ENCODE measurements at regions of chr9 and their contacts with region 1.

Region 1: GRCh38 chr9:131046581-131047202 is 37.7 kb downstream of the LAMC3 start:
- DNase-seq: peak; percentile 74
- ATAC-seq: peak; percentile 84 to 91

Region 2: DNA sequence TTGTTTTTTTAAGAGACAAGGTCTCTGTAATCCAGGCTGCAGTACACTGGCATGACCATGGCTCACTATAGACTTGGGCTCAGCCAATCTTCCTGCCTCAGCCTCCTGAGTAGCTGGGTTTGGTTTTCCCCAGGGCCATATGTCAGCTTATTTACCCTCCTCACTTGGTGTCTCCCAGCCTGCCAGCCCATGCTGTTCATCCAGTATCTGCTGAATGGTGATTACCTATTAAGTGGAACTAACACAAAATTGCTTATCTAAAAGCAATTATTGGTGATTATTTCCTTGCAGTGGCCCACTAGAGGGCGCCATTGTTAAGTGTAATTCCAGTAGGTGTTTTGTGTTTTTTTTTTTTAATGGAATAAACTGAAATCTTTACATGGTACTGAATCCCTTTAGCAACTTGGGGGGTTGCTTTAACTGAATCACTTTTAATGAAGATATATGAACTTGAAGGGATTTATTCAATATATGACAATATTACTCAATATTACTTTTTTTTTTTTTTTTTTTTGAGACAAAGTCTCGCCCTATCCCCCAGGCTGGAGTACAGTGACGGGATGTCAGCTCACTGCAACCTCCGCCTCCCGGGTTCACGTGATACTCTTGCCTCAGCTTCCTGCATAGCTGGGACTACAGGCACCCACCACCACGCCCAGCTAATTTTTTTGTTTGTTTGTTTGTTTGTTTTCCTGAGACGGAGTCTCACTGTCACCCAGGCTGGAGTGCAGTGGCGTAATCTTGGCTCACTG is 339.3 kb before region 1 on chr9:
- intact Hi-C with region 1: loop called in 1 of 2 experiments (anchors 5 kb)
- DNase-seq: peak; percentile 78
- ATAC-seq: peak; percentile 29 to 30

Region 3: DNA sequence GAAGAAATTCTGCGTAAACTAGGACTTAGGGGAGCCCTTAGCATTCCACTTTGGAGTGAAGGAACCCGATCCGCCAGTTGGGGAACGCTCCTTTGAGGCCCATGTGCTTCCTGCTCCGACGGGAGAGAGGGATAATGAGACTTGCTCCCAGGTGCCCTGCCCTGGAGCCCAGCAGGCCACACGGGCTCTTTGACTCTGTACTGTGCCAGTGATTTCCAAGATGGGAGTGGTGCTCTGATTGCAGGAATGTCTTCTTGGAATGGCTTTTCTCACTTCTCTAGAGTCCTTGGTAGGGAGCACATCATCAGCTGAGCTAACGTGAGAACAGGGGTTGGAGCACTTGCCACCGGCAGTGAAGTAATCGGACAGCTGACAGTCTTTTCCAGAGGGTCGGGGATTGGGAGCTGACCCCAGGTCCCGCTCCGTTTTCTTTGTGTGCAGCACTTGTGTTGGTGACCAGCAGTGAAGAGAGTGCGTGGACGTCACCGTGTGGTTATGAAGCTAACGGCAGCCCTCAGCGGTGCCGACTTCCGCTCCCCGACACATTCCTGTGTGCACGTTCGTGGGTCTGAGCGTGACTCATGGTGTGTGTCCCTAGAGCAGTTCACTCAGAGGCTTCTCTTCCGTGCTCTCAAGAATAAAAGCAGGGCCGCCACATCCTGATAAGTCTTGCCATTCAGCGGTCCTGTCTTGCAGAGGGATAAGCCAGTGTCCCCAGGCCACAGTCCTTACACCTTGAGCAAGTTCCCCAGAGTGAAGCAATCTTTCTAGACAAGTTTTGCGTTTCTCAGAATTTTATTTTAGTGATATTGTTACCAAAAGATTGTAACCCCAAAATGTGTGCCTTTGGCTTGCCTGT is 186.0 kb before region 1 on chr9:
- intact Hi-C with region 1: loop called in 1 of 2 experiments (anchors 5 kb)
- DNase-seq: peak; percentile 92
- ATAC-seq: peak; percentile 90 to 95

Region 4: DNA sequence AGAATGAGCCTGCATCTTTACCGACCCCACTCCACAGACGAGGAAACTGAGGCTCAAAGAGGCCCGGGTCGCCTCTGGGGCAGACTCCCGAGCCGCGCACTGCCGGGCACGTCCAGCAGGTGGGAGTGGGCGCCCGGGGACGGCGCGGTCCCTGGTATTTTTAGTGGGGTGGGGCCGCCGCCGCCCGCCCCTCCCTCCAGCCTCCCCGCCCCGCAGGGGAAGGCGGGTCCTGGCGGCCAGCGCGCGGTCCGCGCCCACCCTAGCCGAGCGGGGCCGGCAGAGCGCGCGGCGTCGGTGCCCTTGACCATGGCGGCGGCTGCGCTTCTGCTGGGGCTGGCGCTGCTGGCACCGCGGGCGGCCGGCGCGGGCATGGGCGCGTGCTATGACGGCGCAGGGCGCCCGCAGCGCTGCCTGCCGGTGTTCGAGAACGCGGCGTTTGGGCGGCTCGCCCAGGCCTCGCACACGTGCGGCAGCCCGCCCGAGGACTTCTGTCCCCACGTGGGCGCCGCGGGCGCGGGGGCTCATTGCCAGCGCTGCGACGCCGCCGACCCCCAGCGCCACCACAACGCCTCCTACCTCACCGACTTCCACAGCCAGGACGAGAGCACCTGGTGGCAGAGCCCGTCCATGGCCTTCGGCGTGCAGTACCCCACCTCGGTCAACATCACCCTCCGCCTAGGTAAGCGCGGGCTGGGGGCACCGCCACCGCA is 37.6 kb before region 1 on chr9 and contains the start of gene LAMC3:
- intact Hi-C with region 1: loop called in 1 of 2 experiments (anchors 1 kb)
- DNase-seq: no peak
- ATAC-seq: peak; percentile 51 to 60
- total RNA-seq, gene LAMC3: 0.29 to 1.1 TPM

Measured in left cardiac atrium (tissue), 4 donors.